ENCODE measurements at regions of chr17 and their contacts with region 1.

Region 1: DNA sequence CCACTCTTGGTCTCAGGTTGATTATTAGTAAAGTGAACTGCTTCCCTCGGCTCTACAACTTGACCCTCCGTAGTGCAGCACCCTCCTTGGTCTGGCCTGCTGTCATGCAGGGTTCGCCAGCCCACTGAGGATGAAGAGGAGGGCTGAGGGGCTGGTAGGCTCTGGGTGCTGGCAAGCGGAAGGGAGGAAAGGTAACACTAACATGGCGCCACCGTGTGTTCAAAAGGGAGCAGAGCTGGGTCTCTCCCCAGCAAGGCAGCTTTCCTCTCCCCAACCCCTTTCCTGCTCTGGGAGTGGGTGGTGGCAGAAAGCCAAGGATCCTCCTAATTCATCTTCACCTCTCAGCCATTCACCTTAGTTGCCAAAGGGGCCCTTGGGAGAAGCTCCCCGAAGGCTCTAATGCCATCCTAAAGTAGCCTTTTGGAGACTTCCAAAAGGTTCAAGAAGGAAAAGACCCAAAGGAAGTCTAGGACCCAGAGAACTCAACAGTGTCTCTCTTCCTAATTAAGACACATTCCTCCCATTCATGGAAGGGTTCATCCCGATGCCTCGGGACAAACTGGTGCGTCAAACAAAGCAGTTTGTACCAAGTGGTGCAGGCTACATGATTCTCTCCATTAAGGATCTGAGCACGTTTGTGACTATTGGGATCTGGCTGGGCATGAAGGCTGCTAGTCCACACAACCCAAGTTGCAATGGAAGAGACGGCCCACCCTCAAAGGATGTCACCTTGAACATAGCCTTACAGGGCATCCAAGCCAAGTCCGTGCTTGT is 90.8 kb upstream of the TOB1 start:
- DNase-seq: peak; percentile 75
- H3K4me3 ChIP-seq: no peak overlapping the region; a peak in 1 of 4 replicates
- H3K27ac ChIP-seq: peak overlapping the region in 1 of 2 experiments; percentile 39; a peak in 1 of 4 replicates
- H3K4me1 ChIP-seq: peaks cover 16 to 55% of the 10 kb centered on the region in 2 experiments
- H3K27me3 ChIP-seq: no peaks in the 10 kb centered on the region
- CTCF ChIP-seq: peak; percentile 90
- EP300 ChIP-seq: no peak
- RAD21 ChIP-seq: peak; percentile 89

Region 2: GRCh38 chr17:50872710-50873424 is 84.1 kb before region 1 on chr17:
- CTCF ChIA-PET with region 1: interaction called, 820 read pairs
- POLR2A ChIA-PET with region 1: interaction called, 609 read pairs
- DNase-seq: no peak
- H3K4me3 ChIP-seq: no peak overlapping the region
- H3K27ac ChIP-seq: peak overlapping the region in 1 of 2 experiments; percentile 84; a peak in 2 of 4 replicates
- H3K4me1 ChIP-seq: peaks cover 0 to 30% of the 10 kb centered on the region in 2 experiments; a peak in 2 of 4 replicates
- H3K27me3 ChIP-seq: no peaks in the 10 kb centered on the region
- CTCF ChIP-seq: no peak
- EP300 ChIP-seq: peak; percentile 16 to 39; a peak in 2 of 4 replicates
- RAD21 ChIP-seq: no peak

Region 3: DNA sequence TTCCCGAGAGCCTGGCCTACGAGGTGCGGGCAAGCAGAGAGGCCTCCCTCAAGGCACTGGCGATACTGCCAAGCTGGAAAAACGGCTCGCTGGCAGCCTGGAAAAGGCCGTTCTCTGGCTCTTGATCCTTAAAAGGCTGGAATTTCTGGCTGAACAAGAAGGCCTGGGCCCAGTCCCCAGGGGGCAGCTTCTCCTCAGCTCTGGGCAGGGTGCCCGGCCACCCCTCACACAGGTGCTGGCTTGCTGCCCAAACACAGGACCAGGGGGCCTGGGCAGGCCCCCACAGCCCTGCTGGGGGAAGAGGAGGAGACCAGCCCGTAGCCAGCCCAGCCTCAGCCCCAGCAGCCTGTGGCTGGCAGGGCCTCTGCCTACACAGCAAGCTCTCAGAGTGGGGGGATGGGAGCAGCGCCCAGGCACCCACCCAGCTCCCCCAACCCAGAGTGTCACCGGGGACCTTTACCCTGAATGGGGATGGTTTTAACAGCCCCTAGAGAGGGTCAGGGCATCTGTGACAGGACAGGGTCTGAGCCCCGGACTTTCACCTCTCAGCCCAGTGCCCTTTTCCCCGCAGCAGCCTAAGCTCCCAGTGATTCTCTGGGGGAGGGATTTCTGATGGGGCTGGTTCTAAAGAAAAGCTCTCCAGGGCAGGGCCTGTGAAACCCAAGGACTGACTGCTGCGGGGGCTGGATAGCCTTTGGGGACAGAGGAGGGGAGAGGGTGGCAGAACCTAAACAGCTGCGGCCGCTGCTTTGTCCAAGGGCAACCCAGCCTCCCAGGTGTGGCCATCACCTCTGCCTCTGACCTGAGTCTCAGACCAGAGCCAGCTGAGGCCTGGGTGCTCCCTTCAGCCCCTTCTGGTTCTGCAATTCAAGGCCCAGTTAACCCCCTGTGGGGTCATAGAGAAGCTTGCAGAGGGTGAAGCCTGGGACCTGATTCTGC is 52.1 kb before region 1 on chr17:
- CTCF ChIA-PET with region 1: interaction called, 72 read pairs
- POLR2A ChIA-PET with region 1: interaction called, 34 read pairs
- DNase-seq: peak; percentile 90
- H3K4me3 ChIP-seq: no peak overlapping the region
- H3K27ac ChIP-seq: peak overlapping the region; percentile 61 to 92; a peak in 3 of 4 replicates
- H3K4me1 ChIP-seq: peaks cover 13 to 42% of the 10 kb centered on the region in 2 experiments
- H3K27me3 ChIP-seq: no peaks in the 10 kb centered on the region
- CTCF ChIP-seq: no peak; the same call in 1 of the 2 replicates
- EP300 ChIP-seq: peak in 1 of 2 experiments; percentile 54; a peak in 2 of 4 replicates
- RAD21 ChIP-seq: peak; percentile 77

Region 4: GRCh38 chr17:50931144-50931908 is 25.6 kb before region 1 on chr17:
- CTCF ChIA-PET with region 1: interaction called, 9 read pairs
- POLR2A ChIA-PET with region 1: interaction called, 22 read pairs
- DNase-seq: peak; percentile 95
- H3K4me3 ChIP-seq: peak overlapping the region; percentile 41 to 62
- H3K27ac ChIP-seq: peak overlapping the region; percentile 93 to 98
- H3K4me1 ChIP-seq: peaks cover 15 to 41% of the 10 kb centered on the region in 2 experiments
- H3K27me3 ChIP-seq: no peaks in the 10 kb centered on the region
- CTCF ChIP-seq: no peak
- EP300 ChIP-seq: peak in 1 of 2 experiments; percentile 45; a peak in 1 of 4 replicates
- RAD21 ChIP-seq: no peak; the same call in 1 of the 2 replicates

Region 5: DNA sequence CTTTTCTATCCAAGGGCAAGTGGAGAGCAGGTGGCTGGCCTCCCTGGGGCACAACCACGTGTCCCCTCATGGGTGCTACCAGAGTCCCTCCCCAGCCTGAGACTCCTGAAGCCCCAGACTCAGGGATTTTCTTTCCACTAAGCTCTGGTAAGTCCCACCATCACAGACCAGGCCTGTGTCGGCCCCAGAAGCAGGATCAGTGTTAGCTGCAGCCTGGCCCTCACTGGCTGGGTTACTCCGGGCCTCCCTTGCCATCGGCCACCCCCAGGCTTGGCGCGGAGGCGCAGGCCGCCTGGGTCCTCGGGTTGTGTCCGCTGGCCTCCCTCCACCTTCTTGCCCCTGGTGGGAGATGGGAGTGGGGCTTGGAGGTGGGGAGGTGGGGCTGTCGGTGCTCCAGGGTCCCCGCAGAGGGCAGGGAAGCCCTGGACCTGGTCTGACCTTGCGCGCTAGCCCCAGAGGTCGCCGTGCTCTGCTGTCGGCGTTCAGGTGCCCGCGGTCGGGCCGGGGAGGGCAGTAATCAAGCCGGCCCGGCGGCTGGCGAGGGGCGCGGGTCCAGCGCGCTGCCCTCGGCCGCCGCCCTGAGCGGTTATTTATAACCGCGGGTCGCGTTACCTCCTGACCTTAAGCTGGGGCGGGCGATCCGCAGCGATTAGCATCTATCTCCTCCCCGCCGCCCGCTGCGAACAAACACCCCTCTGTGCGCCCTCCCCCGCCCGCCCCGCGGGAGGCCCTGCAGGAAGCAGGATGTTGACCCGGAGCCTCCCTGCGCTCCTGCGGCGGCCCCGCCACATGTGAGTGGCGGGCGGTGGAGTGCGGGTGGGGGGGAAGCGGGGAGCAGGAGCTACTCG is 12.7 kb before region 1 on chr17:
- CTCF ChIA-PET with region 1: interaction called, 11 read pairs
- POLR2A ChIA-PET with region 1: interaction called, 16 read pairs
- DNase-seq: peak; percentile 92
- H3K4me3 ChIP-seq: peak overlapping the region; percentile 9 to 21; a peak in 3 of 4 replicates
- H3K27ac ChIP-seq: peak overlapping the region; percentile 25 to 85; a peak in 3 of 4 replicates
- H3K4me1 ChIP-seq: peaks cover 10 to 55% of the 10 kb centered on the region in 2 experiments; a peak in 3 of 4 replicates
- H3K27me3 ChIP-seq: no peaks in the 10 kb centered on the region
- CTCF ChIP-seq: no peak
- EP300 ChIP-seq: peak; percentile 29 to 44; a peak in 1 of 4 replicates
- RAD21 ChIP-seq: no peak

Region 6: DNA sequence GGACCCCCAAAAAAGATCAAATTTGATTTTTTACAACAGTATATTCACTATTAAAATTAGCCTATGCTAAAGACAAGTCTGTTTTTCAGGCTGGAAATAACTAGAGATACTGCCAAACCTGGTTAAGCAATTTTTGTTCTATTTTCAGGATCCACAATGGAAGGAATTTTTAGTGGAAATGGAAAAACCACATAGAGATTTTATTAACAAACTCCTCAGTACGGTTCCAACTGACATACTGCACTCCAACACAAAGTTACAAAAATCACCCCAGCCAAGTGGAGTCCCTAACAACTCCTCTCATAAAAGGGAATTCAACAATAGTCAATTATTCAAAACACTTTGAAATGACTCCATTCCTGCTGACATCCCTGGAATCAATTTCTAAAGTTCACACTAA is 10.9 kb after region 1 on chr17:
- CTCF ChIA-PET with region 1: interaction called, 49 read pairs
- POLR2A ChIA-PET with region 1: interaction called, 3 read pairs
- DNase-seq: no peak
- H3K4me3 ChIP-seq: no peak overlapping the region
- H3K27ac ChIP-seq: no peak overlapping the region
- H3K4me1 ChIP-seq: peaks cover 0 to 12% of the 10 kb centered on the region in 2 experiments; a peak in 2 of 4 replicates
- H3K27me3 ChIP-seq: no peaks in the 10 kb centered on the region
- CTCF ChIP-seq: no peak
- EP300 ChIP-seq: no peak
- RAD21 ChIP-seq: no peak

Region 7: GRCh38 chr17:50976951-50977472 is 20.1 kb after region 1 on chr17:
- CTCF ChIA-PET with region 1: interaction called, 49 read pairs
- POLR2A ChIA-PET with region 1: interaction called, 4 read pairs
- DNase-seq: no peak
- H3K4me3 ChIP-seq: no peak overlapping the region
- H3K27ac ChIP-seq: peak overlapping the region in 1 of 2 experiments; percentile 26; a peak in 1 of 4 replicates
- H3K4me1 ChIP-seq: peaks cover 10 to 31% of the 10 kb centered on the region in 2 experiments; a peak in 3 of 4 replicates
- H3K27me3 ChIP-seq: no peaks in the 10 kb centered on the region
- CTCF ChIP-seq: no peak
- EP300 ChIP-seq: no peak
- RAD21 ChIP-seq: no peak

Region 8: DNA sequence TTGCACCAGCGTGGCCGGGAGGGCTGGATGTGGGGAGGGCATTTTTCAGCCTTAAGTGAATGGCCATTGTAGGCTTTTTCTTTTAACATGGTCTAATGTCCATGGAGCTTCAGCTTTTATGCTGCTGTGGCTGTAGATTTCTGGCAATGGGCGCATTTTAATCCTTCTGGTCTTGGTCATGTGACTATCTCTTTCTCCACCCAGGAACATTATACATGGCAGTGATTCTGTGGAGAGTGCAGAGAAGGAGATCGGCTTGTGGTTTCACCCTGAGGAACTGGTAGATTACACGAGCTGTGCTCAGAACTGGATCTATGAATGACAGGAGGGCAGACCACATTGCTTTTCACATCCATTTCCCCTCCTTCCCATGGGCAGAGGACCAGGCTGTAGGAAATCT is 204.6 kb after region 1 on chr17:
- CTCF ChIA-PET with region 1: no interaction called
- POLR2A ChIA-PET with region 1: no interaction called
- DNase-seq: no peak
- H3K4me3 ChIP-seq: no peak overlapping the region
- H3K27ac ChIP-seq: no peak overlapping the region
- H3K4me1 ChIP-seq: peaks cover 4 to 9% of the 10 kb centered on the region in 2 experiments; a peak in 2 of 4 replicates
- H3K27me3 ChIP-seq: no peaks in the 10 kb centered on the region
- CTCF ChIP-seq: no peak
- EP300 ChIP-seq: no peak
- RAD21 ChIP-seq: no peak